ENCODE measurements at regions of chr6 and their contacts with region 1.

Region 1: GRCh38 chr6:136582711-136583471 is 32.7 kb upstream of the MAP7 start:
- DNase-seq: peak; percentile 7
- ATAC-seq: no peak
- H3K4me3 ChIP-seq: no peak overlapping the region
- H3K27ac ChIP-seq: no peak overlapping the region
- H3K4me1 ChIP-seq: no peaks in the 10 kb centered on the region
- H3K27me3 ChIP-seq: no peaks in the 10 kb centered on the region
- CTCF ChIP-seq: no peak
- EP300 ChIP-seq: no peak
- POLR2A ChIP-seq: no peak
- RAD21 ChIP-seq: no peak

Region 2: DNA sequence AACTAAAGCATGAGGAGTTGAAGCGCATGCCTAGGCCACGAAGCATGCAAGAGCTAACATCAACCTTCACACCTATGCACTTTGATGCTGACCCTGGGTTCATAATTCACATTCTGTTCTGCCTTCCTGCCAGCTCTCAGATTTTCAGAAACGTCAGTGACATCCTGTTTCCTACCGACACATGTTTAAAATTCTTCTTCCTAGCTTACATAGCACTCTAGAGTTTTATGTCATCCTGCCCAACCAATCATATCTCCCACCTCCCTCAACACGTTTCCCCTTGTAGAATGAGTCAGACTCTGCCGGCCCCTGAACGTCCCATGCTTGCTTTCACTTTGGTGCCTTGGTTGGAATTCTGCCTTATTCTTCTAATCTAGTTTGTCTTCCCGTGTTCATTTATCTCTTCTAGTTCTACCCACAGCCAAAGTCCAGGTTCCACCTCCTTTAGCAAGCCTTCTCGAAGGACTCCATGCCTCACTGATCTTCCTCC is 64.5 kb after region 1 on chr6:
- CTCF ChIA-PET with region 1: no interaction called
- POLR2A ChIA-PET with region 1: no interaction called
- in situ Hi-C with region 1: no loop called
- intact Hi-C with region 1: no loop called
- DNase-seq: no peak
- ATAC-seq: no peak
- H3K4me3 ChIP-seq: no peak overlapping the region
- H3K27ac ChIP-seq: no peak overlapping the region
- H3K4me1 ChIP-seq: no peaks in the 10 kb centered on the region
- H3K27me3 ChIP-seq: no peaks in the 10 kb centered on the region; a peak in 1 of 5 replicates
- CTCF ChIP-seq: no peak
- EP300 ChIP-seq: no peak
- POLR2A ChIP-seq: no peak
- RAD21 ChIP-seq: no peak

Region 3: GRCh38 chr6:136792410-136793262 is 209.7 kb after region 1 on chr6 and contains the start of gene MAP3K5:
- CTCF ChIA-PET with region 1: no interaction called
- POLR2A ChIA-PET with region 1: no interaction called
- in situ Hi-C with region 1: no loop called
- intact Hi-C with region 1: loop called (anchors 10 kb)
- DNase-seq: peak; percentile 33
- ATAC-seq: peak; percentile 92
- H3K4me3 ChIP-seq: peak within 1 kb of the TSS; percentile 39 to 67 (median 41)
- H3K27ac ChIP-seq: no peak within 1 kb of the TSS
- H3K4me1 ChIP-seq: peaks cover 18% of the 10 kb centered on the region
- H3K27me3 ChIP-seq: peaks cover 1 to 55% of the 10 kb centered on the region in 2 experiments; a peak in 4 of 5 replicates
- CTCF ChIP-seq: peak; percentile 68
- EP300 ChIP-seq: no peak
- POLR2A ChIP-seq: no peak
- RAD21 ChIP-seq: peak; percentile 70
- total RNA-seq, gene MAP3K5: not detected in 2 replicates